B cell (primary cell): ENCODE measurements at regions of chr2 and their contacts with region 1.

Region 1: DNA sequence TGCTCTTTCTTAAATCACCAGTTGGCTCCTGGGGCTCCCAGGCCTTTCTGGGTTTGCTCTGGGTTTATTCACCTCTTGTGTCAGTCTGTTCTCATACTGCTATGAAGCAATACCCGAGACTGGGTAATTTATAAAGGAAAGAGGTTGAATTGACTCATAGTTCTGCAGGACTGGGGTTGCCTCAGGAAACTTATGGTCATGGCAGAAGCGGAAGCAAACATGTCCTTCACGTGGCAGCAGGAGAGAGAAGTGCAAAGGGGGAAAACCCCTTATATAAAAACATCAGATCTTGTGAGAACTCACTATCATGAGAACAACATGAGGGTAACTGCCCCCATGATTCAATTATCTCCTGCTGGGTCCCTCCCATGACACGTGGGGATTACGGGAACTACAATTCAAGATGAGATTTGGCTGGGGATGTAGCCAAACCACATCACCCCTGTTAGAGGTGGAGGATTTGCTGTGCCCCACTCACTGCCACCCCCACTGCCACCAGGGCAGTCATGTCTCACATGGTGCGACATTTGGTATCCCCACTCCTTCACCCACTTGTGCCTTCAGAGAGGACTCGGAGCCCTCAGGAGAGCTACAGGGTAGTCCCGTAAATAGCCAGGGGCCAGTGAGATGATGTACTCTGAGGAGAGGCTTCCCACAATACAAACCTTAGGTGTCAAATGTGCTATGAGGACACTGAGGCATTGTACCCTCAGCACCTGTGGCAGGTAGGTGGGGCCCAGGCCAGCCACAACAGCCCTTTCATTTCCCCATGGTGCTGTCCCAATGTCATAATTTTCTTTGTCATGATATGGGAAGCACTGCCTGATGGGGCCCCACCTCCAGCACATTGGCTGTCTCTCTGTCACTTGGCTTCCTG is 35.7 kb downstream of the CDC42EP3 start:
- DNase-seq: peak; percentile 90
- ATAC-seq: peak; percentile 85
- H3K4me3 ChIP-seq: peak overlapping the region in 1 of 5 experiments; percentile 37
- H3K4me3 Mint-ChIP-seq: peak overlapping the region; percentile 72
- H3K27ac ChIP-seq: peak overlapping the region; percentile 93 to 98
- H3K27ac Mint-ChIP-seq: peak overlapping the region; percentile 96
- H3K4me1 ChIP-seq: peaks cover 33 to 34% of the 10 kb centered on the region in 2 donors
- H3K4me1 Mint-ChIP-seq: peaks cover 44% of the 10 kb centered on the region
- H3K27me3 ChIP-seq: no peaks in the 10 kb centered on the region
- H3K27me3 Mint-ChIP-seq: no peaks in the 10 kb centered on the region
- CTCF ChIP-seq: no peak

Region 2: DNA sequence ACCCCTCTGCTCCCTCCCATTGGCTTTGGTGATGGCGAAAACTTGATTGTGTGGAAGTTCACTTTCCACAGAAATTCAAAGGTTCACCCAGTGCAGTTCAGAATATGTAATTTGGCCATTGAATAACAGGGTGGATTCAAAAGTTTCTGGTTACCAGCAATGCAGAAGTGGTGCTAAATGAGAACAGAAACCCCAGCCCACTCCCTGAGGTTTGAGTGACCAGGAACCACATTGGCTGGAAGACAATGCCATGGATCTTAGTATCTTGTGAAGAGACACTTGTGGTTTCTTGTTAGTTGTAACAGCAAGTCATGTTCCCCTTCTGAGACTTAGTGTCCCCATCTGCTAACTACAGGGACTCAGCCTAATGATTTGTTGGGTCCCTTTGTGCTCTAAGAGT is 241.5 kb before region 1 on chr2:
- CTCF ChIA-PET with region 1: no interaction called
- POLR2A ChIA-PET with region 1: no interaction called
- intact Hi-C with region 1: no loop called
- DNase-seq: no peak
- ATAC-seq: no peak
- H3K4me3 ChIP-seq: no peak overlapping the region
- H3K4me3 Mint-ChIP-seq: no peak overlapping the region
- H3K27ac ChIP-seq: no peak overlapping the region
- H3K27ac Mint-ChIP-seq: peak overlapping the region; percentile 22
- H3K4me1 ChIP-seq: peaks cover 24 to 26% of the 10 kb centered on the region in 2 donors
- H3K4me1 Mint-ChIP-seq: peaks cover 5% of the 10 kb centered on the region
- H3K27me3 ChIP-seq: no peaks in the 10 kb centered on the region
- H3K27me3 Mint-ChIP-seq: no peaks in the 10 kb centered on the region
- CTCF ChIP-seq: no peak

Region 3: DNA sequence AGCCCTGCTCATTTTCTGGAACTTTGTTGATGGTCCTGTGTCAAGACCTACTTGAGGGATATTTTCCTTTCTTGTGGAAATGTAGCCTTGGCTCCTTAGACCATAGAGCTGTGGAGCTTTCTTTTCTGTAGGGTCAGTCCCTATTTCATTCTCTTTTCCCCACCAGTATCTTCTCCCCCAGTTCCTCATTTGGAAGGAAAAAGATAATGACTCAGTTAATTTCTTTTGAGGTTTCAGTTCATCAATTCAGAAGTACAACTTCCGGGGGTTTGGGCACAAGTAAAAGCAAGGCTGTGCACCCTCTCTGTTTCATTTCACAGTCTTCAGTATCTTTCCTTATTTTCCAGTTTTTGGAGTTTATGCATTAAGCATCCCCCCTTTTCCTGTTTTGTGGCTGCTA is 35.0 kb before region 1 on chr2:
- CTCF ChIA-PET with region 1: no interaction called
- POLR2A ChIA-PET with region 1: no interaction called
- intact Hi-C with region 1: loop called (anchors 5 kb)
- DNase-seq: peak; percentile 32
- ATAC-seq: peak; percentile 54
- H3K4me3 ChIP-seq: peak overlapping the region in 3 of 5 experiments; percentile 2 to 16 (median 13)
- H3K4me3 Mint-ChIP-seq: peak overlapping the region; percentile 53
- H3K27ac ChIP-seq: peak overlapping the region in 1 of 2 donors; percentile 4
- H3K27ac Mint-ChIP-seq: no peak overlapping the region
- H3K4me1 ChIP-seq: peaks cover 15 to 18% of the 10 kb centered on the region in 2 donors
- H3K4me1 Mint-ChIP-seq: peaks cover 24% of the 10 kb centered on the region
- H3K27me3 ChIP-seq: peaks cover 0 to 7% (median 0%) of the 10 kb centered on the region in 4 experiments
- H3K27me3 Mint-ChIP-seq: no peaks in the 10 kb centered on the region
- CTCF ChIP-seq: no peak

Region 4: GRCh38 chr2:37623971-37624900 is 11.5 kb before region 1 on chr2:
- CTCF ChIA-PET with region 1: interaction called, 5 read pairs
- POLR2A ChIA-PET with region 1: no interaction called
- intact Hi-C with region 1: loop called (anchors 1 kb)
- DNase-seq: peak; percentile 57
- ATAC-seq: peak; percentile 46
- H3K4me3 ChIP-seq: no peak overlapping the region
- H3K4me3 Mint-ChIP-seq: peak overlapping the region; percentile 55
- H3K27ac ChIP-seq: peak overlapping the region; percentile 58 to 61
- H3K27ac Mint-ChIP-seq: peak overlapping the region; percentile 92
- H3K4me1 ChIP-seq: peaks cover 52 to 54% of the 10 kb centered on the region in 2 donors
- H3K4me1 Mint-ChIP-seq: peaks cover 60% of the 10 kb centered on the region
- H3K27me3 ChIP-seq: no peaks in the 10 kb centered on the region
- H3K27me3 Mint-ChIP-seq: no peaks in the 10 kb centered on the region
- CTCF ChIP-seq: no peak

Region 5: GRCh38 chr2:37653805-37654378 is 18.1 kb after region 1 on chr2:
- CTCF ChIA-PET with region 1: interaction called, 4 read pairs
- POLR2A ChIA-PET with region 1: interaction called, 6 read pairs
- intact Hi-C with region 1: loop called (anchors 1 kb)
- DNase-seq: peak; percentile 85
- ATAC-seq: peak; percentile 56
- H3K4me3 ChIP-seq: peak overlapping the region in 3 of 5 experiments; percentile 15 to 41 (median 35)
- H3K4me3 Mint-ChIP-seq: peak overlapping the region; percentile 67
- H3K27ac ChIP-seq: peak overlapping the region; percentile 81 to 87
- H3K27ac Mint-ChIP-seq: peak overlapping the region; percentile 84
- H3K4me1 ChIP-seq: peaks cover 85 to 86% of the 10 kb centered on the region in 2 donors
- H3K4me1 Mint-ChIP-seq: peaks cover 91% of the 10 kb centered on the region
- H3K27me3 ChIP-seq: no peaks in the 10 kb centered on the region
- H3K27me3 Mint-ChIP-seq: no peaks in the 10 kb centered on the region
- CTCF ChIP-seq: no peak

Region 6: DNA sequence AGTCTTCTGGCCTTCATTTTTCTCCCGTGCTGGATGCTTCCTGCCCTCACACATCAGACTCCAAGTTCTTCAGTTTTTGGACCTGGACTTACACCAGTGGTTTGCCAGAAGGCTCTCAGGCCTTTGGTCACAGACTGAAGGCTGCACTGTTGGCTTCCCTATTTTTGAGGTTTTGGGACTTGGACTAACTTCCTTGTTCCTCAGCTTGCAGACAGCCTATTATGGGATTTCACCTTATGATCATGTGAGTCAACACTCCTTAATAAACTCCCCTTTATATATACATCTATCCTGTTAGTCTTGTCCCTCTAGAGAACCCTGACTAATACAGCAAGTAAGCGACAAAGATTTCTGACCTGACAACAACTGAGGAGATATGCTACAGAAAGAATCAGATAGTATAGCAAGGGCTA is 28.5 kb after region 1 on chr2:
- CTCF ChIA-PET with region 1: no interaction called
- POLR2A ChIA-PET with region 1: no interaction called
- intact Hi-C with region 1: no loop called
- DNase-seq: no peak
- ATAC-seq: no peak
- H3K4me3 ChIP-seq: no peak overlapping the region
- H3K4me3 Mint-ChIP-seq: no peak overlapping the region
- H3K27ac ChIP-seq: no peak overlapping the region
- H3K27ac Mint-ChIP-seq: peak overlapping the region; percentile 8
- H3K4me1 ChIP-seq: peaks cover 35% of the 10 kb centered on the region in 2 donors
- H3K4me1 Mint-ChIP-seq: peaks cover 77% of the 10 kb centered on the region
- H3K27me3 ChIP-seq: no peaks in the 10 kb centered on the region
- H3K27me3 Mint-ChIP-seq: no peaks in the 10 kb centered on the region
- CTCF ChIP-seq: no peak